ENCODE measurements at regions of chr6 and their contacts with region 1.

Region 1: GRCh38 chr6:118397671-118398465 is 150.2 kb upstream of the PLN start:
- DNase-seq: no peak
- ATAC-seq: no peak
- H3K4me3 ChIP-seq: no peak overlapping the region
- H3K27ac ChIP-seq: peak overlapping the region; percentile 36 to 49
- H3K4me1 ChIP-seq: peaks cover 0 to 13% of the 10 kb centered on the region in 2 donors
- H3K27me3 ChIP-seq: no peaks in the 10 kb centered on the region

Region 2: DNA sequence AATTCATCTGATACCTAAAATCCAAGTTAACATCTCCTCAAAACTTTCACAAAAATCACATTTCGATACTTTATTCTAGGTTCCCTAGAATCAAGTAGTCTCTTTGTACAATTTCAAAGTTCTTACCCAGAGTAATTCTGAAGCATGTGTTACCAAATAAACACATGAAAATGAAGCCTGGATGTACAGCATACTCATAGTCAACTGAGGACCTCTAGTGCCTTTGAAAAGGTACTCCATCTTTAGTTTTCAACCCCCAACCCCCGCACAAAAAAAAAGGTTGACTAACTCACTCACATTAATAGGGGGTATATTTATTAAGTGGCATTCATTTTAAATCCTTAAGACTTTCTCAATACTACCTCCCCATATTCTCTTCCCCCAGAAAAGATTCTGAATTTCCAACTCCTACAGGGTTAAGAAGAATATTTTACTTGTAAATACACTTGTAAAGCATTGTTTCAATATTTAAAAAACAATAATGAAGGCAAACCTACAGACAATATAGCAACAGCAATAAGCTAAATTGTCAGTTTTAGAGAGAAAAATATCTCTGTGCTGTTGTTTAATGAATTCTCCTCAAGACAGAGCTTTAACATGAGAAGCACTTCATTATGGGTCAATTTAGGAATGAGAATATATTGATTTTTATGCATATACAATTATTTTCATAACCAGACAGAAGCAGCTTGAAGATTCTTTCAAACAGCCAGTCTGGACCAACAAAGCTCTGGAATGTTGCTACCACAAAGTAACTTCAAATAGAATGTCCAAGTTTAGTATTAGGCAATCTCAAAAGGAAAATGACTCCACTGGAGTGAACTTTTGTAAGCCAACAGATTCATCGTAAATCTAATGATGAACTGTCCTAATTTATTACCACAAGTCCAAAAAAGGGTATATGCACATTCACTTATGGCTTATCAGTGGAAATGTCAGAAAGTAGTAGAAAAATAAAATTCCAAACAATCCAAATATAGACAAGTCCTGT is 153.5 kb after region 1 on chr6:
- intact Hi-C with region 1: loop called in 1 of 2 experiments (anchors 10 kb)
- DNase-seq: no peak
- ATAC-seq: peak; percentile 67
- H3K4me3 ChIP-seq: peak overlapping the region; percentile 93 to 98
- H3K27ac ChIP-seq: no peak overlapping the region
- H3K4me1 ChIP-seq: no peaks in the 10 kb centered on the region
- H3K27me3 ChIP-seq: no peaks in the 10 kb centered on the region

Measured in aorta (tissue), 5 donors.